Psoas muscle (tissue), 8 donors: ENCODE measurements at regions of chr4 and their contacts with region 1.

Region 1: GRCh38 chr4:120049732-120050494 is 16.7 kb downstream of the MAD2L1 start:
- DNase-seq: peak; percentile 52 to 72
- ATAC-seq: peak; percentile 91 to 92 (median 91)
- H3K4me3 ChIP-seq: peak overlapping the region; percentile 17
- H3K27ac ChIP-seq: no peak overlapping the region
- H3K4me1 ChIP-seq: peaks cover 24% of the 10 kb centered on the region
- H3K27me3 ChIP-seq: no peaks in the 10 kb centered on the region
- CTCF ChIP-seq: peak; percentile 82

Region 2: DNA sequence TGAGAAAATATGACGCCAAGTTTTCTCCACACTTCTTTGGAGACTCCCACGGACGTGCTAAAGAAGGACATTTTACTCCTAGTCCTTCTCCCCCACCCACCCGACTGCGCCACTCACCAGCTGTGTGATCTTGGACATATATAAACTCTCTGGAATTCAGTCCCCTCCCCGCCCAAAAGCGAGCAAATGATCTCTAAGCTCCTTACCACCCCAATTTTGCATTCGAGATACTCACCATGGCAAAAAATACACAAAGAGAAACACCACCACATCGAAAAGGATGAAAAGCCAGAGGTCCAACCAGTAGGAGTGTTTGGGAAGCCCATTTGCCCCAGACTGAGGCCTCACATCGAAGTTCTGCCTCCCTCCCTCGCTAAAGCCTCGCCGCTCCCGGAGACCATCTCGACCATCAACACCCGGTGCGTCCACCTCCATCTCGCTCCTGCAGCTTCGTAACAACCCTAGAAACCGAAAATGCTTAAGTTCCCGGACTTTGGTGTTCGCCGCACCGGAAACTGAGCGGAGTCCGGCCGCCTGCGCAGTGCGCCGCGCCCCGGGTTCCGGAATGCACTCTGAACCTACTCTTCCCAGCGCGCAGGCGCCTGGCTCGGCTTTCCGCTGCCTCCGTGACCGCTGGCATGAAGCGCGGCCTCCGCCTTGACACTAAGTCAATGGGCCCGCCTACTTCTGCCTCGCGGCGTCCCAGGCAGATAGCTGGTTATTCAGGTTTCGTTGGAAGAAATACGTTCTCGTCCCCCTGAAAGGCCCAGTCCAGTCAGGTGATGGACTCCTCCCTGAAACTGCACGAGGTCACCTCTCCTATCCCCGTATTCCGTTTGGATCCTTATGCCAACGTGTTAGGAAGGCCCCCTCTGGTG is 749.6 kb before region 1 on chr4:
- intact Hi-C with region 1: loop called in 1 of 2 experiments (anchors 10 kb)
- DNase-seq: peak; percentile 96
- ATAC-seq: peak; percentile 93 to 96 (median 96)
- H3K4me3 ChIP-seq: peak overlapping the region; percentile 69
- H3K27ac ChIP-seq: peak overlapping the region; percentile 84
- H3K4me1 ChIP-seq: peaks cover 26% of the 10 kb centered on the region
- H3K27me3 ChIP-seq: no peaks in the 10 kb centered on the region
- CTCF ChIP-seq: no peak

Region 3: GRCh38 chr4:119559044-119559647 is 490.8 kb before region 1 on chr4:
- intact Hi-C with region 1: loop called (anchors 5 to 10 kb)
- DNase-seq: no peak
- ATAC-seq: peak in 1 of 4 donors; percentile 76
- H3K4me3 ChIP-seq: no peak overlapping the region
- H3K27ac ChIP-seq: no peak overlapping the region
- H3K4me1 ChIP-seq: no peaks in the 10 kb centered on the region
- H3K27me3 ChIP-seq: no peaks in the 10 kb centered on the region
- CTCF ChIP-seq: peak; percentile 57

Region 4: GRCh38 chr4:119628308-119629141 is 421.4 kb before region 1 on chr4 and contains the start of gene PDE5A:
- intact Hi-C with region 1: loop called (anchors 2 kb)
- DNase-seq: peak; percentile 78 to 90
- ATAC-seq: peak; percentile 88 to 91 (median 91)
- H3K4me3 ChIP-seq: peak within 1 kb of the TSS; percentile 92
- H3K27ac ChIP-seq: peak within 1 kb of the TSS; percentile 85
- H3K4me1 ChIP-seq: peaks cover 5% of the 10 kb centered on the region
- H3K27me3 ChIP-seq: no peaks in the 10 kb centered on the region
- CTCF ChIP-seq: peak; percentile 79
- total RNA-seq, gene PDE5A: 4.4 to 21.1 (median 7.4) TPM

Region 5: GRCh38 chr4:119692001-119692400 is 357.9 kb before region 1 on chr4:
- intact Hi-C with region 1: loop called in 1 of 2 experiments (anchors 5 kb)
- DNase-seq: no peak
- ATAC-seq: peak in 1 of 4 donors; percentile 50
- H3K4me3 ChIP-seq: no peak overlapping the region
- H3K27ac ChIP-seq: no peak overlapping the region
- H3K4me1 ChIP-seq: no peaks in the 10 kb centered on the region
- H3K27me3 ChIP-seq: no peaks in the 10 kb centered on the region
- CTCF ChIP-seq: peak; percentile 40

Region 6: GRCh38 chr4:119825696-119826095 is 224.2 kb before region 1 on chr4:
- intact Hi-C with region 1: loop called in 1 of 2 experiments (anchors 10 kb)
- DNase-seq: no peak
- ATAC-seq: no peak
- H3K4me3 ChIP-seq: no peak overlapping the region
- H3K27ac ChIP-seq: no peak overlapping the region
- H3K4me1 ChIP-seq: no peaks in the 10 kb centered on the region
- H3K27me3 ChIP-seq: no peaks in the 10 kb centered on the region
- CTCF ChIP-seq: no peak